AG04449 (cell line): ENCODE measurements at regions of chr13 and their contacts with region 1.

Region 1: DNA sequence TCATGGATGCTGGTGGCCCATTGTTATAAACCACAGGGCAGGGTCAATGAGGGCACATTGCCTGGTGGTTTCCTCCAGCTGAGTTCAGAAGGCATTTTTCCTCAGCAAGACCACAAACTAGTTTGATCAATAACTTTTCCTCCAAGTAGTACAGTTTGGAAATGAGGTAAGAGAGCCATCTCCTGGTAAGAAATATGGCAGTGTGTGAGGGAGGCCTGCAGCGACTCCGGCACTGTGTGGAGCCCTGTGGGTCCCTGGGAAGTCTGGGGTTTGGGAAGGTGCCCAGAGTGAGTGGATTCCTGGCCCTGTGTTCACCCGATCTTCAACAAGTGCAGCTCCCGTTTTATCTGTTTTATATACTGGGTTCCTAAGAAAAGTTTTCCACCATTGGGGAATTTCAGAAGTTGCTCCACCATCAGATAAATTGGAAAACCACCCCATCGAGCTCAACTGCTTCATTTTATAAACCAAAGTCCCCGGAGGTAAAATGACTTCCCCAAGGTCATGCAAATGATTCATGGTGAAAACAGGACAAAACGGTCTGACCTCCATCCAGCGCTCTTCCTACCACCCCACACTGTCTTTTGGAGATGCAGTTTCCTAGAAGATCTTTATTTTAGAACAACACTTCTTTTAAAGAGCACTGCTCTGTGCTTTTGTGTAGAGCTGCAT is 148.4 kb downstream of the KATNAL1 start:
- DNase-seq: peak; percentile 45
- H3K4me3 ChIP-seq: no peak overlapping the region
- CTCF ChIP-seq: peak; percentile 61

Region 2: GRCh38 chr13:29771247-29771646 is 387.7 kb before region 1 on chr13:
- CTCF ChIA-PET with region 1: interaction called, 17 read pairs
- POLR2A ChIA-PET with region 1: no interaction called
- DNase-seq: no peak
- H3K4me3 ChIP-seq: no peak overlapping the region
- CTCF ChIP-seq: peak; percentile 4

Region 3: DNA sequence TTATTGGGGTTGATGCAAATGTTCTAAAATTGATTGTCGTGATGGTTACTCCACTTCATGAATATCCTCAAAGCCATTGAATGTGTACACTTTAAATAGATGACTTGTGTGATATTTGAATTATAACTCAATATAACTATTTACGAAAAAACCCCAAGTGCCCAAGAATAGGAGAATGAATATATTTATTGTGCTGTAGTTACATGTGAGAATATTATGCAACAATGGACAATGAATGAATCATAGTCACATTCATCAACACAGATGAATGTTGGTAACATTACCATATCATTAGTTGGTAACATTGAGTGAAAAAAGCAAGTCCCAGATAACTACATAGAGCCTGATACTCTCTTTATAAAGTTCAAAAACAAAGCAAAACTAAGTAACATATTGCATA is 180.7 kb before region 1 on chr13:
- CTCF ChIA-PET with region 1: no interaction called
- POLR2A ChIA-PET with region 1: no interaction called
- DNase-seq: no peak
- H3K4me3 ChIP-seq: no peak overlapping the region
- CTCF ChIP-seq: no peak

Region 4: DNA sequence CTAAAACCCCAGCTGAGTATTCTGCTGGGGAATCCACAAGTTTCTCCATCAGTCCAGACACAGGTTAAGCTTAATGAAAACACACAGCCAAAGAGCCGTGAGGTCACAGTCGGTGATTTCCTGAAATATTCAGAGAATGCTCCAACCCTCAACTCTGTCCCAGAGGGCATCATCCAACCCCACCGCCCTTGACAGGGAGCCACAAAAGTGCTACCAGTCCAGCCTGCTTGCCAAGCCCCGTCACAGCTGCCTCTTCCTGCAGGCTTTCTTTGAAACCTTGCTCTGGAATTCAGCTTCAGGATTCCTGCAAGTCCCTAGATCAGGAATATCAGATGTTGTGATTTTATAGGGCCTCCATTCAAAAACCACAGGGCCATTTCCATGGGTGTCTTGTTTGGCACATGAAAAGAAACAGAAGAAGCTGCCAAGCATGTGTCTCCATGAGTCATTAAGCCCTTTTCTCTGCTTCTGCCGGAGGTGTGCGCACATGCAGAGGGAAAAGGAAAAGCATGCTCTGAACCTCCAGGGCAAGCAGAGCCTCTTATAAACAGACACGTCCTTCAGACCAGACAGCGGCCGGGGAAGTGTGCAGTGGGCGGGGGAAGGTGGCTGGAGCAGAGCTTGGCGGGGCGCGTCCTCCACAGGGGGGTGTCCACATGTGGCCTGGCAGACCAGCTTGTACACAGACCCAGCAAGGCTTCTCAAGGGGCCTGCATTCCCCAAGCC is 16.3 kb before region 1 on chr13:
- CTCF ChIA-PET with region 1: interaction called, 231 read pairs
- POLR2A ChIA-PET with region 1: no interaction called
- DNase-seq: peak; percentile 98
- H3K4me3 ChIP-seq: peak overlapping the region; percentile 20
- CTCF ChIP-seq: no peak

Region 5: DNA sequence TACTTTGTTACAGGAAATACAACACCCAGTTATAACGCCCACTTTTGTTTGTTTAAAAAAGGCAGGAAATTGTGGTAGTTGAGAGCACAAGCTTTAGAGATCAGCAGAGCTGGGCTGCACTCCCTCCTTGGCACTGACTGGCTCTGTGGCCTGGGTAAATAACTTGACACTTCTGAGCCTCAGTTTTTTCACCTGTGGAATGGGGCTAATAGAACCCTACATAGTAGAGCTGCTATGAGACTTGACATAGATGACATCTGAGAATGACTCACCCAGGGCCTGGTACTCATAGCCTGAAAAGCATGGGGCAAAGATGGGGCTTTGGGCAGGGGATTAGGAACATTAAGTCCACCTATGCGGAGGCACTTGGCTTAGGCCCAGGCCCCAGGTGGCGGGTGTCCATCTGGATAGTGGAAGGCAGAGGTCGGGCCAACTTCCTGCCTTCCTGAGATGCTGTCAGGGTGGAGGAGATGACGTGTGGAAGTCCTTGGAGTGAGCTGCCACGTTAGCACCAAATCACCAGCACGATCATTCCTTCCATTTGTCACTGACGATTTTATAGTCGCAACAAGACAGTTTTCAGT is 10.6 kb before region 1 on chr13:
- CTCF ChIA-PET with region 1: interaction called, 29 read pairs
- POLR2A ChIA-PET with region 1: no interaction called
- DNase-seq: no peak
- H3K4me3 ChIP-seq: no peak overlapping the region
- CTCF ChIP-seq: no peak

Region 6: GRCh38 chr13:30204564-30204963 is 45.7 kb after region 1 on chr13:
- CTCF ChIA-PET with region 1: no interaction called
- POLR2A ChIA-PET with region 1: no interaction called
- DNase-seq: no peak
- H3K4me3 ChIP-seq: no peak overlapping the region
- CTCF ChIP-seq: no peak